Mammary epithelial cell (primary cell): ENCODE measurements at regions of chr11 and their contacts with region 1.

Region 1: DNA sequence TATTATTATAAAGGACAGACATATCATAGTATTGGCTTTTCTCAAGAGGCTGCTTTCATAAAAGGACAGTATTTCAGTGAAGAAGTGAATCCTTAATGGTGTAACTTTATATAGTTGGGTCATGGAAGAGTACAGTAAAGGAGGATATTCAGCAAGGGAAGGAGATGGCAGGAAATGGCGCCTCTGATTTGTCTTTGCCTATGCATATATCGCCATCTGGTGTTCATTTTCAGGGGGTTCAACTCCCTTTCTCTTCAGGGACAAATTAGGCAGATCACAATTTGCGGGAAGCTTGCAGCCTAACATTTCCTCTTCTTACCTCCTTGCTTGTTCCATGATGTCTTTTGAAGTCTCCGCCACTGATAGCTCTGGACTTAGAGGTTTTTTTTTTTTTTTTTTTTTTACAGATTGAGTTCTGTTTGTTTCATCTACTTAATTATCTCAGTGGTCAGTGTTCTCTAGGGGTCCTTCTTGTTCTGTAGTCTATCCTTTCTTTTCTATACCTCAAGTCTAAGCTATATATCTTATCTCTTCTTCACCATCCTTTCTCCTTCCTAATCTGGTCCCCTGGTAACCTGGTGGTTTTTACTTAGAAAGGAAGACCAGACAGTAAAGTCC is 21.8 kb upstream of the RRM1 start:
- DNase-seq: peak; percentile 61
- H3K4me3 ChIP-seq: no peak overlapping the region
- H3K27ac ChIP-seq: no peak overlapping the region
- H3K4me1 ChIP-seq: peaks cover 9% of the 10 kb centered on the region
- H3K27me3 ChIP-seq: no peaks in the 10 kb centered on the region
- CTCF ChIP-seq: peak; percentile 81 to 83

Region 2: DNA sequence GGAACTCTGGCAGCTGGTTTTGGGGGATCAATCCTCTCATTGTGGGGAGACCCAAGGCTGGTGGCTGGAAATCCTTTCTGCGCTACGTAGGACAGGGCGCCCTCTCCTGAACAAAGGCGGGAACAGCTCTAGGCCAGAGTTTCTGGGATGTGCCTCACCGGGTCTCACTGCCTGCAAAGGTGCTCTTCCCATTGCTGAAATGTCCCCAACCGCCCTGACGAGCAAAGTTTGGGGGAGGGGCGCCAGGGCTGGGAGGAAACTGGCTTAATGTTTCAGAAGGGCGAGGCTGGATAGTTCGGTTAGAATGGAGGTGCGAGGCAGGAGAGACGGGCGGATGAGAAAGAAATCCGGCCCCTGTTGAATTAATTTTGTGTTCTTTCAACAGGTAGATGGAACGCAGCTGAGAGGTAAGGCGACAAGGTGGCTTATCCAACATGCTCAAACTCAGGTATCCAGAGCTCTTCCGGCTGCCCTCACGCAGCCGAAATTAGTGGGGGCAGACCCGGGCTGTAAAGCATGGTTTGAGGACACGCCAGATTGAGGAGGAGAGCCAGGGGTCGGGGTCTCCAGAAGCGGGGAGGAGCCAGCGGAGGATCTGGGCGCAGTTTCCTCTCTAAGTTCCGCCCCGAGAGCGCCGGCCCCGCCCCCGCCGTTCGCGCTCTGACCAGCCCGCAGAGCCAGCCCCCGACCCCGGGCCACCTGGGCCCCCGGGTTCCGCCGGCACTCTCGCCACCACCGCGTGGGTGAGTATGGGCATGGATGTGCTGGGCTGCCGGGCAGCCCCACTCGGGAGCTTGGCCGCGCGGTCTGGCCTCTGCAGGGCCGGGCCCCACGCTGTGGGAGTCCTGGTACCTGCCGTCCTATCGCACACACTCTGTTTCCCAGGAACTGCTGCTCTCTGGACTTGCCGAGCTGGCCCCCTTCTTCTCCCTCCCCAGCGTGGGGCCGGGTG is 264.6 kb before region 1 on chr11 and contains the start of gene PGAP2:
- CTCF ChIA-PET with region 1: no interaction called
- dilution Hi-C with region 1: no loop called
- in situ Hi-C with region 1: no loop called
- intact Hi-C with region 1: loop called (anchors 1 kb)
- DNase-seq: peak; percentile 62
- H3K4me3 ChIP-seq: peak within 1 kb of the TSS; percentile 65 to 77 (median 68)
- H3K27ac ChIP-seq: peak within 1 kb of the TSS; percentile 21
- H3K4me1 ChIP-seq: peaks cover 26% of the 10 kb centered on the region
- H3K27me3 ChIP-seq: no peaks in the 10 kb centered on the region
- CTCF ChIP-seq: peak; percentile 77 to 87
- total RNA-seq, gene PGAP2: 20.3 to 36.4 TPM

Region 3: GRCh38 chr11:3822312-3822711 is 250.5 kb before region 1 on chr11:
- CTCF ChIA-PET with region 1: interaction called, 11 read pairs
- dilution Hi-C with region 1: no loop called
- in situ Hi-C with region 1: no loop called
- intact Hi-C with region 1: no loop called
- DNase-seq: no peak
- H3K4me3 ChIP-seq: no peak overlapping the region
- H3K27ac ChIP-seq: no peak overlapping the region
- H3K4me1 ChIP-seq: peaks cover 20% of the 10 kb centered on the region
- H3K27me3 ChIP-seq: no peaks in the 10 kb centered on the region
- CTCF ChIP-seq: no peak

Region 4: GRCh38 chr11:3841426-3842350 is 231.1 kb before region 1 on chr11:
- CTCF ChIA-PET with region 1: interaction called, 15 read pairs
- dilution Hi-C with region 1: no loop called
- in situ Hi-C with region 1: loop called (anchors 5 kb)
- intact Hi-C with region 1: loop called (anchors 2 kb)
- DNase-seq: no peak
- H3K4me3 ChIP-seq: peak overlapping the region; percentile 44 to 78 (median 71)
- H3K27ac ChIP-seq: peak overlapping the region; percentile 67
- H3K4me1 ChIP-seq: peaks cover 27% of the 10 kb centered on the region
- H3K27me3 ChIP-seq: no peaks in the 10 kb centered on the region
- CTCF ChIP-seq: peak; percentile 51 to 90

Region 5: DNA sequence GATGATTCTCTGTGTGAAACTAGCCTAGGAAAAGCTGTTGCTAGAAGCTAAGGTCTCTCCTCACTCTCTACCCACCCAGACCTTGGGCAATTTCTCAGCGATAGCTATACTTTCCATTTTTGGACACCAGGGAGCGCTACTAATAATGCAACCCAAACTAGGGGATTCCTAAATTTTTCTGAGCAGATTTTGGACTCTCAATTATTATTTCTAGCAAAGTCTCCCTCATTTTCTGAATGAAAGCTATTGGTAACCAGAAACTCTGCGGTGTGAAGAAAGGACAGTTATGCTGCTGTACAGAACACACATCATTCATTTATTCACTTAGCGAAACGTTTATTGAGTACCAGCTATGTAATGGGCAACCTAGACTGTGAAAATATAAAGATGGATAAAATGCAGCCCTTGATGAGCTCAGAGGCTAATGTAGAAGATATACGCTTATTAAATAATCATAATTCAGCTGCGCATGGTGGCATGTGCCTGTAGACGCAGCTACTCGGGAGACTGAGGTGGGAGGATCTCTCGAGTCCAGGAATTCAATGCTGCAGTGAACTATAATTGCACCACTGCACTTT is 223.4 kb before region 1 on chr11:
- CTCF ChIA-PET with region 1: interaction called, 33 read pairs
- dilution Hi-C with region 1: loop called (anchors 5 kb)
- in situ Hi-C with region 1: loop called (anchors 5 kb)
- intact Hi-C with region 1: loop called (anchors 1 kb)
- DNase-seq: peak; percentile 32
- H3K4me3 ChIP-seq: no peak overlapping the region
- H3K27ac ChIP-seq: no peak overlapping the region
- H3K4me1 ChIP-seq: peaks cover 4% of the 10 kb centered on the region
- H3K27me3 ChIP-seq: no peaks in the 10 kb centered on the region
- CTCF ChIP-seq: peak; percentile 59 to 74

Region 6: GRCh38 chr11:3854977-3855807 is 217.6 kb before region 1 on chr11 and contains the start of gene STIM1:
- CTCF ChIA-PET with region 1: interaction called, 22 read pairs
- dilution Hi-C with region 1: loop called (anchors 5 kb)
- in situ Hi-C with region 1: no loop called
- intact Hi-C with region 1: loop called (anchors 1 kb)
- DNase-seq: peak; percentile 87
- H3K4me3 ChIP-seq: peak within 1 kb of the TSS; percentile 69 to 90 (median 87)
- H3K27ac ChIP-seq: peak within 1 kb of the TSS; percentile 79
- H3K4me1 ChIP-seq: peaks cover 30% of the 10 kb centered on the region
- H3K27me3 ChIP-seq: no peaks in the 10 kb centered on the region
- CTCF ChIP-seq: peak; percentile 81 to 92
- total RNA-seq, gene STIM1: 57.0 to 74.0 TPM

Region 7: DNA sequence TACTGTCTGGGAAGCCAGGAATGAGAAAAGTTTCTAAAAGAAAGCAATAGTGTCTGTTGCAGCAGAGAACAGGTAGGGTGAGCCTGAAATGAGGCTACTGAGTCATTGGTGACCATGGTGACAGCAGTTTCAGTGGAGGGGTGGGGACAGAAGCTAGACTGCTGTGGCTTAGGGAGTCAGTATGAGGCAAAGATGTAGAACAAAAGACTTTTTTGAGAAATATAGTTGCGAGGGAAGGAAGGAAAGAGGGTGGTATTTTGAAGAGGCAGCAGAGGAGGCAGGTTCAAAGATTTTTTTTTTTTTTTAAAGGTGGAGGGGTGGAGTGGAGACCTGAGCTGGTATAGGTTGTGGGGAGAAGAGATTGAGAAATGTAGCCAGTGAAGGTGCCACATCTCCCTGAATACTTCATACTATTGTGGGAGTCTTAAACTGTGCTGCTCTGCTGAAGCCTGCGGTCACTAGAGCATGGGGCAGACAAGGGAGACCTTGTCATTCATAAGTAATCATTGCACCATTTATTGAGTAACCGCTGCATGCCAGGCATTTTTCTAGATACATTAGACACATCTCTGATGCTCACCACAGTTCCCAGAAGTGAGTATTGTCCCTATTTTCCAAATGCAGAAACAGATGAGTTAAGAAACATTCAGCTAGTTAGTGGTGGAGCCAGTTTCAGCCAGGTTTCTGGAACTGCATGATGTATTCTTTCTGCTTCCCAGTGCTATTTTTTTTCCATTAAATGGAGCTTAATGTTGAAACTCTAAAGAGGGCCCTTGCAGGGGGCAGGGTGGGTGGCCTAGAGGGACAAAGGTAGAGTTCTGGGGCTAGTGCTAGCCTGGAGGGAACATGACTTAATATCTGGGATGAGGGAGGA is 167.5 kb before region 1 on chr11:
- CTCF ChIA-PET with region 1: no interaction called
- dilution Hi-C with region 1: no loop called
- in situ Hi-C with region 1: no loop called
- intact Hi-C with region 1: loop called (anchors 5 kb)
- DNase-seq: peak; percentile 97
- H3K4me3 ChIP-seq: peak overlapping the region in 1 of 3 experiments; percentile 25
- H3K27ac ChIP-seq: peak overlapping the region; percentile 97
- H3K4me1 ChIP-seq: peaks cover 57% of the 10 kb centered on the region
- H3K27me3 ChIP-seq: no peaks in the 10 kb centered on the region
- CTCF ChIP-seq: no peak